Colonic mucosa (tissue), 4 donors: ENCODE measurements at regions of chr17 and their contacts with region 1.

Region 1: DNA sequence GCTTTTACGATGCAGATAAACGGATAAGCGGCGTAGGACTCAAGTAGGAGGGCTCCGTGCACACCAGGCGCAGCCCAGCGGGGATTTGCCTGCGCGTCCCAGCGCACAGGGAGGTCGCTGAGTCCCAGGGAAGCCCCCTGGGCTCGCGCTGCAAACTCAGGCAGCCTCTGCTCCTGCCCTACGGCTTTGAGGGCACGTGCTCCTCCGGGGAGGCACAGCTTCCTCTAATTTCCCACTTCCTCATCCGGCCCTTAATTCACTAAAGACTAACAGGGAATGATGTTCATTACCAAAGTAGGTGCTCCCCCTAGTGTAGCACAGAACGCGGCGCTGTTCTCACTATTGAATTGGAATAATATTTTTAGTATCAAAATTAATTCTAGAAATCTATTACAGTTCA is 825.4 kb downstream of the KCNJ18 start:
- DNase-seq: no peak
- H3K4me3 ChIP-seq: no peak overlapping the region
- H3K27ac ChIP-seq: no peak overlapping the region
- H3K4me1 ChIP-seq: no peaks in the 10 kb centered on the region
- H3K27me3 ChIP-seq: no peaks in the 10 kb centered on the region
- CTCF ChIP-seq: no peak

Region 2: GRCh38 chr17:22463110-22463850 is 54.4 kb before region 1 on chr17:
- intact Hi-C with region 1: loop called (anchors 5 kb)
- DNase-seq: no peak
- H3K4me3 ChIP-seq: no peak overlapping the region
- H3K27ac ChIP-seq: no peak overlapping the region
- H3K4me1 ChIP-seq: no peaks in the 10 kb centered on the region
- H3K27me3 ChIP-seq: no peaks in the 10 kb centered on the region
- CTCF ChIP-seq: no peak